Activated T-helper 1 cell treated with anti-CD3 and anti-CD28 coated beads, Interleukin-12 subunit alpha, Interleukin-12 subunit beta, Interleukin-2, Interleukin-4 antibody, amounts not matched to agents 30 ng/mL and 10 ng/mL and 1 ng/mL, durations not matched to agents 14 hours and 24 hours and 36 hours (primary cell): ENCODE measurements at regions of chr1 and their contacts with region 1.

Region 1: DNA sequence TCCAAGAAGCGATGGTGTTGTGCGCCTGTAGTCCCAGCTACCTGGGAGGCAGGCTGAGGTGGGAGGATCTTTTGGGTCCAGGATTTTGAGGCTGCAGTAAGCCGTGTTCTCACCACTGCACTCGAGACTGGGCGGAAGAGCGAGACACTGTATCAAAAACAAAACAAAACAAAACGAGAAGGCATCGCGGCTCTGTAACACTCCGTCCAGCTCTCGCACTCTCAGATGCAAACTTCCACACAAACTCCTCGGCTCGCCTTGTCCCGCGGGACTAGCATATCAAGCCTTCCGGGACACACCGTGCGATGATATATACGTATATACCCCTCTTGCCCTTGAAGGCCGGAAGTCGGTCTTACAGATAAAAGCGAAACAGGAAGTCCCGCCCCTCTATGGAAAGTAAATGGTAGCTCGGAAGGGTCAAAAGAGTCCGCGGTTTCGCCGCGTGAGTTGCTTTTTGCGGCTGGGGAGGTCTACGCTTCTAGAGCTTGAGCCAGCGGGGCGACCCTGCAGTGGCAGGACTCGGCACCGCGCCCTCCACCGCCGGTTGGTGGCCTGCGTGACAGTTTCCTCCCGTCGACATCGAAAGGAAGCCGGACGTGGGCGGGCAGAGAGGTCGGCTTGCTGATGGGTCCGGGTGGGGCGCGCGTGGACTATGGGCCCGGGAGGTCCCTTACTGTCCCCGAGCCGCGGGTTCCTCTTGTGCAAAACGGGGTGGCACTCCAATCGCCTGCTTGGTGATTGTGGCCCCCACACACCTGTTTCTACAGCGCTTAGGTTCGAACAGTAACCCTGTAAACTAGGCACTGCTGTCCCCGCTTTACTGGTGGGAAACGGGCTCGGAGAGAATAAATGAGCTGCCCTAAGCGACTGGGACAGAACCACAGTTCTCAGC is at the start of gene COA6:
- DNase-seq: peak; percentile 85
- H3K4me3 Mint-ChIP-seq: peak within 1 kb of the TSS; percentile 97
- H3K27ac Mint-ChIP-seq: peak within 1 kb of the TSS; percentile 96
- H3K4me1 Mint-ChIP-seq: peaks cover 57% of the 10 kb centered on the region
- H3K27me3 Mint-ChIP-seq: peaks cover 2% of the 10 kb centered on the region
- total RNA-seq, gene COA6: 57.2 and 66.9 TPM in 2 replicates

Region 2: DNA sequence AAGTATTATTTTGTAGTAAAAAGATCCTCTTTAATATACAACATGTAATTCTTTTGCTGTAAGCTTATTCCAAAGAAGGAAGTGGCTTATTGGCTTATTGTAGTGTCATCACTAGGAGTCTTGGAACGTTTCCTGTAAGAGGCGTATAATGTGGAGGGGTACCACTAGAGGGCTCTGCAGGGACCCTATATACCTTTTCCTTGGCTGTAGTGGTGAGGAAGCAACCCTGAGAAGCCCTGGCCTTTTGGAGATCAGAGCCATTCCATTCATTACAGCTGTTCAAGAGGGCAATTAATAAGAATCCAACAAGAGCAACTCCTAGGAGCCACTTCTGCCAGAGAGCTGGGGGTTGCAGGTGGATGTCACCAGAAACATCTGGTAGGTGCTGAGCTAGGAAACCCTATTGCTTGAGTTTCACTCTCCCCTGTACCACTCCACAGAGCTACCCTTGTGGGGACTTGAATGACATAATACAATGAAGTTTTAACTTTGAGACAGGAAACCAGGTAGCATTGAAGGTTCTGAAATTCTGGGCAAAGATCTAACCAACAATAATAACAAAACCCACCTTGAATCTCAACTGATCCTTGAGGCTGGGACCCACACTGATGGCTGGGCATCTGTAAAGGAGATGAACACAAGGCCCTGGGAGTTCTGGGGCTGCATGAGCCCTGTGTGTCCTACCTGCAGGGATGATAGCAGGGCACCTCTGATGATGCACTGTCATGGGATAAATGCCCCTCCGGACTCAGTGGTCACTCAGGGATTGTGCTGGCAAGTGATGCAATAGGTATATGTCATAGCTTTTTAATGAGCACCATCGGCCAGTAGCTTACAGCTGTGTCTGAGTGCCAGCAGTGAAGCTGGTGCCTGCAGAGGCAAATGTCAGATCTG is 160.3 kb before region 1 on chr1:
- intact Hi-C with region 1: loop called (anchors 1 kb)
- DNase-seq: no peak
- H3K4me3 Mint-ChIP-seq: peak overlapping the region; percentile 75
- H3K27ac Mint-ChIP-seq: no peak overlapping the region
- H3K4me1 Mint-ChIP-seq: peaks cover 35% of the 10 kb centered on the region
- H3K27me3 Mint-ChIP-seq: peaks cover 9% of the 10 kb centered on the region

Region 3: DNA sequence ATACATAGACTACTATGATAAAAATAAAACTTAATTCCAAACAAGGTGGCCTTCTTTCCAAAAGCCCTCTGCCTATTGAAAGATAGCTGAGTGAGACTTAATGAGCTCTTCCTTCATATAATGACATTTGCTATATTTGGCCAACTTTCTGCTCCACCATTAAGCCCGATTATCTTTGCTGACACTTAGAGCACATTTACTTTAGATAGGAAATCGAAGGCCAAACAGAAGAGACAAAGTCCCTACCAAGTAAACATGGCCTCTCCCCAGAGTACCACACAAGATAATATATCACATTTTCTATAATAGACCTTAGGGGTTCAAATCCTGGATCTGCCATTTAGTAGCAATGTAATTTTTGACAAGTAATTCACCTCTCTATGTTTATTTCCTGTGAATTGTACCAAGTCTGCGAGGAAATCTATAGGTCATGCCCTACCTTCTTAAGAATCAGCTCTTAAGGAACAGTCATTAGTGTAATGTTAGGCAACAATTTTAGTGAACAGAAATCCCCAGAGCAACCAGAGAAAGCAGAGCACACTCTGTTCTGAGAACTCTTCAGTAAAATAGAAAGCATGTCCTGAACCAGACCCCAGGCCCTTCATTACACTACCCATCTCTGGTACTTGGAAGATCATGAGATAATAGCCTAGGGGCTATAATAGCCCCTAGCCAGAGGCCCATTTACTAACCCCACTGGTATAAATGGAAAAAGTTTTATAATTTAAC is 17.4 kb before region 1 on chr1:
- intact Hi-C with region 1: loop called (anchors 1 kb)
- DNase-seq: no peak
- H3K4me3 Mint-ChIP-seq: peak overlapping the region; percentile 90
- H3K27ac Mint-ChIP-seq: peak overlapping the region; percentile 30
- H3K4me1 Mint-ChIP-seq: peaks cover 21% of the 10 kb centered on the region
- H3K27me3 Mint-ChIP-seq: peaks cover 15% of the 10 kb centered on the region

Region 4: GRCh38 chr1:234409328-234409727 is 36.0 kb after region 1 on chr1:
- intact Hi-C with region 1: loop called (anchors 1 kb)
- DNase-seq: peak; percentile 19
- H3K4me3 Mint-ChIP-seq: peak overlapping the region; percentile 56
- H3K27ac Mint-ChIP-seq: peak overlapping the region; percentile 85
- H3K4me1 Mint-ChIP-seq: peaks cover 40% of the 10 kb centered on the region
- H3K27me3 Mint-ChIP-seq: no peaks in the 10 kb centered on the region

Region 5: GRCh38 chr1:234645474-234645953 is 272.2 kb after region 1 on chr1:
- intact Hi-C with region 1: no loop called
- DNase-seq: no peak
- H3K4me3 Mint-ChIP-seq: no peak overlapping the region
- H3K27ac Mint-ChIP-seq: no peak overlapping the region
- H3K4me1 Mint-ChIP-seq: peaks cover 6% of the 10 kb centered on the region
- H3K27me3 Mint-ChIP-seq: no peaks in the 10 kb centered on the region

Region 6: GRCh38 chr1:234676103-234676594 is 302.8 kb after region 1 on chr1:
- intact Hi-C with region 1: loop called (anchors 2 kb)
- DNase-seq: peak; percentile 40
- H3K4me3 Mint-ChIP-seq: peak overlapping the region; percentile 82
- H3K27ac Mint-ChIP-seq: peak overlapping the region; percentile 71
- H3K4me1 Mint-ChIP-seq: peaks cover 14% of the 10 kb centered on the region
- H3K27me3 Mint-ChIP-seq: peaks cover 5% of the 10 kb centered on the region

Region 7: DNA sequence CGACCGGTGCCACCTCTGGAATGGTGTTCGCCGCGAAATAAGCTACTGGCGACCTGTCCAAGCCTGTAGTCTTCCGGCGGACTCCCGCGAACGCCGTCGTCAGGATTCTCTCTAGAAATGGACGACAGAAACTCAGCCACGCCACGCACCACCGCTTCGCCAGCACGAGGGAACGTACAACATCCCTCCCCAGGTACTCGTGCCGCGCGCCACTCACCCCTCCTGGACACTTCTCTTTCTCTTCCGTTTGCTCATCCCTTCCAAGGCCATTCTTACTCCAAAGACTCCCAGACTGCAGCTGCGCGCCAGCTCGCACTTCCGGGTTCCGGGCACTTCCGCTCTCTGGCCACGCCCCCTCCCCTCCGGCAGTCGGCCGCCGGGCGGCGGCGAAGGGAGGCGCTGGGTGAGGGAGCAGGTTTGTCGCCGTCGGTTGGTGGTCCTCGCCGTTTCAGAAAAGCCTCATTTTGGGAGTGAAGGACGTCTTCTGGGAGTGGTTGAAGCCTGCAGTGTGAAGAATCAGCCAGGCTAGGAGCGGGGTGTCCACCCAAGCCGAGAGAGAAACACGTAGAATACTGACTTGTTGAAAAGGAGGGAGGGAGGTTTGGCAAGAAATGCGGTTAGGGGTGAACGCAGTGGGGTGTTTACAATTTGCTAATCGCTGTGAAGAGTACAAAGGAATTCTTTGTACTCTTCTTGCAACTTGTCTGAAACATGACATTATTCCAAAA is 787.8 kb after region 1 on chr1 and contains the start of gene RBM34:
- intact Hi-C with region 1: loop called (anchors 1 kb)
- DNase-seq: peak; percentile 92
- H3K4me3 Mint-ChIP-seq: peak within 1 kb of the TSS; percentile 98
- H3K27ac Mint-ChIP-seq: peak within 1 kb of the TSS; percentile 97
- H3K4me1 Mint-ChIP-seq: peaks cover 16% of the 10 kb centered on the region
- H3K27me3 Mint-ChIP-seq: no peaks in the 10 kb centered on the region
- total RNA-seq, gene RBM34: 120 and 127 TPM in 2 replicates

Region 8: DNA sequence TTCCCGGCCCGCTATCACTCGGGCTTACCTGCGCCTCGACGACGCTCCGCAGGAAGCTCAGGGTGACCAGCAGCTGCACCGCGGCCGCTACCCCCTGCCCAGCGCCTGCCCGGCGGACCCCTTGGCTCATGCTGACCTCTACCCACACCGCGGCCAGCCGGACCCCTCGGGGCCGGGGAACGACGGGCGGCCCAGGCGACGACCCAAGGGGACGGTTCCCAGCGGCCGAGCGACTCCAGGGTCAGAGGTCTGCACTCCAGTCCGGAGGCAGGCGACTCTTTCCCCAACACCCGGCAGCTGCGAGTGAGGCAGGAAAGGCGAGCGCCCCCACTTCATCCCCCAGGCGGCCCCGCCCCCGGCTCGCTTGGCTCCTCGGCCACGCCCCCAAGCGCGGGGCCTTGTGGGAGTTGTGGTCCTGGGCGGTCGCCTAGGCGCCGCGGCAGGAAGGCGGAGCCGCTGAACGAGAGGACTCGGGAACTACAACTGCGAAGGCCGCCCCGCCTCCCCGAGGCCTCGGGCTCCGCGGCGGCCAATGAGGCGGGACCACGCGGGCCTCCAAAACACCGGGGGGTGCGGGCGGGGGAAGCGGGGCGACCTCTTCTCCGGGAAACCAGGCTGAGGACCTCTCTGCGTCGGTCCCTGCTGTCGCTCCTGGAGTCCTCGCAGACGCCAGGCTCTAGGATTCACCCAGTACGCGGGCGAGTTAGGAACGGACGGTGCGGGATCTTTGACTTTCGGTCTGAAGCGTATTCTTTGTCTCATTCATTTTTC is 1908.5 kb after region 1 on chr1 and contains the start of gene ERO1B:
- intact Hi-C with region 1: loop called (anchors 10 kb)
- DNase-seq: peak; percentile 98
- H3K4me3 Mint-ChIP-seq: peak within 1 kb of the TSS; percentile 90
- H3K27ac Mint-ChIP-seq: peak within 1 kb of the TSS; percentile 80
- H3K4me1 Mint-ChIP-seq: peaks cover 45% of the 10 kb centered on the region
- H3K27me3 Mint-ChIP-seq: peaks cover 12% of the 10 kb centered on the region
- total RNA-seq, gene ERO1B: 2.1 and 2.4 TPM in 2 replicates